ENCODE measurements at regions of chr19 and their contacts with region 1.

Region 1: DNA sequence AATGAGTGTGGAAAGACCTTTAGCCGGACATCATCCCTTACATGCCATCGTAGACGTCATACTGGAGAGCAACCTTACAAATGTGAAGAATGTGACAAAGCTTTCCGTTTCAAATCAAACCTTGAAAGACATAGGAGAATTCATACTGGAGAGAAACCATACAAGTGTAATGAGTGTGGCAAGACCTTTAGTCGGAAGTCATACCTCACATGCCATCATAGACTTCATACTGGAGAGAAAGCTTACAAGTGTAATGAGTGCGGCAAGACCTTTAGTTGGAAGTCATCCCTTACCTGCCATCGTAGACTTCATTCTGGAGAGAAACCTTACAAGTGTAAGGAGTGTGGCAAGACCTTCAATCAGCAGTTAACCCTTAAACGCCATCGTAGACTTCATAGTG is 11.7 kb upstream of the ZNF813 start:
- DNase-seq: no peak
- ATAC-seq: no peak
- H3K4me3 ChIP-seq: no peak overlapping the region
- H3K27ac ChIP-seq: no peak overlapping the region
- H3K4me1 ChIP-seq: no peaks in the 10 kb centered on the region
- H3K27me3 ChIP-seq: no peaks in the 10 kb centered on the region
- CTCF ChIP-seq: no peak
- POLR2A ChIP-seq: no peak
- RAD21 ChIP-seq: no peak

Region 2: DNA sequence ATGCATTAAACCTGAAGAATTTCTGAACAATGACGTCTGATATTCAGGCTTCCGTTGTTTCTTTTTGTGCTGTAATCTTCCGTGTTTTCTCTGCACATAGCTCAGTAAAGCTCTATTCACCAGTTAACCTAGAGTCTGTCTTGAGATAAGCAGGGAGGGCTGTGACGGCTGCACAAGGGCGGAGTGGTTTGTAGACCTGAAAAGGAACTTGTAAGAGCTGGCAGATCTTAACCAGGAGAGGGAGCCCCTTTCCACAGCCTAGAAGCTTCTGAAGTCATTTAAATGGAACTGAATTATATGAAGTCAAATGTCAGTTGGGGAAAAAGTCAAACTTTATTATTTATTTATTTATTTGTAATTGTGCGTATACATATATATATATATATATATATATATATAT is 203.5 kb after region 1 on chr19:
- CTCF ChIA-PET with region 1: no interaction called
- POLR2A ChIA-PET with region 1: no interaction called
- RAD21 ChIA-PET with region 1: no interaction called
- intact Hi-C with region 1: loop called (anchors 10 kb)
- DNase-seq: no peak
- ATAC-seq: no peak
- H3K4me3 ChIP-seq: no peak overlapping the region
- H3K27ac ChIP-seq: no peak overlapping the region
- H3K4me1 ChIP-seq: no peaks in the 10 kb centered on the region
- H3K27me3 ChIP-seq: no peaks in the 10 kb centered on the region
- CTCF ChIP-seq: no peak
- POLR2A ChIP-seq: no peak
- RAD21 ChIP-seq: no peak

Measured in HCT116 (cell line).